Activated T-helper 1 cell treated with anti-CD3 and anti-CD28 coated beads, Interleukin-12 subunit alpha, Interleukin-12 subunit beta, Interleukin-2, Interleukin-4 antibody, amounts not matched to agents 30 ng/mL and 10 ng/mL and 1 ng/mL, durations not matched to agents 14 hours and 24 hours and 36 hours (primary cell): ENCODE measurements at regions of chr2 and their contacts with region 1.

Region 1: GRCh38 chr2:27628767-27629709 is at the starts of genes CCDC121 and GPN1:
- DNase-seq: peak; percentile 93
- H3K4me3 Mint-ChIP-seq: no peak within 1 kb of the TSS
- H3K27ac Mint-ChIP-seq: peak within 1 kb of the TSS; percentile 73
- H3K4me1 Mint-ChIP-seq: peaks cover 20% of the 10 kb centered on the region
- H3K27me3 Mint-ChIP-seq: no peaks in the 10 kb centered on the region
- total RNA-seq, gene CCDC121: 0.66 and 1.3 TPM in 2 replicates
- total RNA-seq, gene GPN1: 48.3 and 51.0 TPM in 2 replicates

Region 2: GRCh38 chr2:27409321-27410073 is 219.5 kb before region 1 on chr2 and contains the start of gene PPM1G:
- intact Hi-C with region 1: loop called (anchors 1 kb)
- DNase-seq: peak; percentile 95
- H3K4me3 Mint-ChIP-seq: peak within 1 kb of the TSS; percentile 90
- H3K27ac Mint-ChIP-seq: peak within 1 kb of the TSS; percentile 89
- H3K4me1 Mint-ChIP-seq: peaks cover 29% of the 10 kb centered on the region
- H3K27me3 Mint-ChIP-seq: peaks cover 2% of the 10 kb centered on the region
- total RNA-seq, gene PPM1G: 158 and 160 TPM in 2 replicates

Region 3: GRCh38 chr2:27582695-27583389 is 46.2 kb before region 1 on chr2 and contains the start of gene ZNF512:
- intact Hi-C with region 1: loop called (anchors 1 kb)
- DNase-seq: peak; percentile 75
- H3K4me3 Mint-ChIP-seq: peak within 1 kb of the TSS; percentile 86
- H3K27ac Mint-ChIP-seq: peak within 1 kb of the TSS; percentile 79
- H3K4me1 Mint-ChIP-seq: peaks cover 45% of the 10 kb centered on the region
- H3K27me3 Mint-ChIP-seq: peaks cover 7% of the 10 kb centered on the region
- total RNA-seq, gene ZNF512: 24.6 and 25.0 TPM in 2 replicates

Region 4: GRCh38 chr2:27683390-27684071 is 54.5 kb after region 1 on chr2:
- intact Hi-C with region 1: loop called (anchors 1 kb)
- DNase-seq: peak; percentile 80
- H3K4me3 Mint-ChIP-seq: no peak overlapping the region
- H3K27ac Mint-ChIP-seq: peak overlapping the region; percentile 74
- H3K4me1 Mint-ChIP-seq: peaks cover 32% of the 10 kb centered on the region
- H3K27me3 Mint-ChIP-seq: no peaks in the 10 kb centered on the region